ENCODE measurements at regions of chr13 and their contacts with region 1.

Region 1: DNA sequence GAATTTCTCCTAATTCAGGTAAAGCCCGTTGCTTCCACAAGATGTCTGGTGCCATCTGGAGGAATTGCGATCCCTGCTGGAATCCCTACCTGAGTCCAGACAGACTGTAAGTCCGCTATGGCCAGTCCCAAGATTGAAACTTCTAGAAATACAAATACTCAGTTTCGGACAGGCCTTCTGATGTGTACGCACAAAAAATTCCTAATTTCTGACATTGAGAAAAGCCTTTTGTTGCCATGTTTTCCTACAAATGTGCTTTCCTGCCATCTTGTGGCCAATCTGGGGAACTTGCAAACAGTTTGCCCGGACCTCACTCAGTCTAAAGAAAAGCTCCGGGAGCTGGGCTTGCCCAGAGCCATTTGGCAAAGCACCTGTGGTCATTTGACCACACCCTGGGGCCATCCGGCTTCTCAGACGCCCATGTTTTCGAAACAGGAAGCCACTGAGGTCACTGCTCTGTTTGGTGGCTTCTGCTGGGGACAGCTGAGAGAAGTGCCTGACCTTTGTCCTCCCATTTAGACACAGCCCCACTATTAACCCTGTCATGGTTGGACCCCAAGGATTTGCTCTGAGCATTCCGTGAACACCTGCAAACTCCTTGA is 79.4 kb downstream of the SLC15A1 start:
- DNase-seq: peak; percentile 41 to 66 (median 47)
- H3K4me3 ChIP-seq: no peak overlapping the region
- H3K27ac ChIP-seq: no peak overlapping the region
- H3K4me1 ChIP-seq: peaks cover 1% of the 10 kb centered on the region
- H3K27me3 ChIP-seq: no peaks in the 10 kb centered on the region
- CTCF ChIP-seq: peak; percentile 51 to 78 (median 66)
- EP300 ChIP-seq: no peak
- POLR2A ChIP-seq: no peak

Region 2: DNA sequence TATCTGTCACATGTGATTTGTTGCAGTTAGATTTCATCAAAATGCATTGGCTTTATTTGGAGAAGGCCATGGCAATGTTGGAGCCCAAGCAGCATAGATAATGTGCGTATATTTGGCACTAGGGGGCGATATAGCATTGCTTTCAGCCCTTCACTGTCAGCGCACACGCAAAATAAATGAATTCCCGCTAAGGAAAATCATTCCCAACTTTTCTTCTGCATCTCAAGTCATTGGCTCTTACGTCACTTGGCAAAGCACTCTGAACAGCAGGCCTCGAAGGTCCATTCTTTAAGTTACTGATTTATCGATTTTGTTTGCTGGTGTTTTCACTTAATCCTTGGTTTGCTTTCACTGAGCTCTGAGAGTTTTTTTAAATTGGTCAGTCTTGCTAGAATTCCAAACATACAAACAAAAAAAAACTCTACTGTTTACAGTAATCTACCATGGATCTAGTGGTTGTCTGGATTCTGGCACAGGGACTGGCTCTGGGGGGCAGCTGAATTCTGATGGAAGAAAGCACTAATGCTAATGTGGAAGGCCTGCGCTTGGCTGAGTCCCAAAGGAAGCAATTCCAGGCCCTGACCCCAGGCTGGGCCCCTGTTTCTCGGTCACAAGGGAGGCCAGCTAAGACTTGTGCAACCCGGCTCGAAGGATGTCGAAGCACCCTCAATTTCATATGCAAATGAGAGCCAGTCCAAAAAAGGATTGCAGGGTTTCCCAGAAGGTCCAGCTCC is 817.3 kb before region 1 on chr13:
- intact Hi-C with region 1: loop called in 1 of 4 experiments (anchors 10 kb)
- DNase-seq: peak; percentile 21 to 48 (median 41)
- H3K4me3 ChIP-seq: no peak overlapping the region
- H3K27ac ChIP-seq: no peak overlapping the region
- H3K4me1 ChIP-seq: peaks cover 3% of the 10 kb centered on the region
- H3K27me3 ChIP-seq: no peaks in the 10 kb centered on the region
- CTCF ChIP-seq: peak; percentile 47 to 68 (median 50)
- EP300 ChIP-seq: no peak
- POLR2A ChIP-seq: no peak

Region 3: DNA sequence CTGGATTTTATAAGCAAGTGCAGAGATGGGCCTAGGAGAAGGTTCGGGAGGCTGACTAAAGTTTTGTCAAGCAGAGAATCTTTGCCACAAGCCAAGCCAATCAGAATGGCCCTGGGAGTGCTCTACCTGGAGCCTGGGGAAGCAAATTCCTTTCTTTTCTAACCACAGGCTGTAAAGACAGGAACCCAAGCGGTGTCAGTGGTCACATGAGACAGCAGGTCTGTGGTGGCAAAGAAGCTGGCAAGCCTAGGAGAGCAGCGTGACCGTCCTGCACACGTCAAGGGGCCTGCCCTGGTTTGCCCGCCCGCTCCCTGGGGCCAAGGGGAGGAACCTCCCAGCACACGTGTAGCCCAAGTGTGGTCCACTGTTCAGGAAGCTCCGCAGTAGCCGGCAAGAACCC is 628.7 kb before region 1 on chr13:
- intact Hi-C with region 1: loop called in 1 of 4 experiments (anchors 10 kb)
- DNase-seq: no peak
- H3K4me3 ChIP-seq: no peak overlapping the region
- H3K27ac ChIP-seq: no peak overlapping the region
- H3K4me1 ChIP-seq: no peaks in the 10 kb centered on the region
- H3K27me3 ChIP-seq: no peaks in the 10 kb centered on the region
- CTCF ChIP-seq: no peak
- EP300 ChIP-seq: no peak
- POLR2A ChIP-seq: no peak

Region 4: DNA sequence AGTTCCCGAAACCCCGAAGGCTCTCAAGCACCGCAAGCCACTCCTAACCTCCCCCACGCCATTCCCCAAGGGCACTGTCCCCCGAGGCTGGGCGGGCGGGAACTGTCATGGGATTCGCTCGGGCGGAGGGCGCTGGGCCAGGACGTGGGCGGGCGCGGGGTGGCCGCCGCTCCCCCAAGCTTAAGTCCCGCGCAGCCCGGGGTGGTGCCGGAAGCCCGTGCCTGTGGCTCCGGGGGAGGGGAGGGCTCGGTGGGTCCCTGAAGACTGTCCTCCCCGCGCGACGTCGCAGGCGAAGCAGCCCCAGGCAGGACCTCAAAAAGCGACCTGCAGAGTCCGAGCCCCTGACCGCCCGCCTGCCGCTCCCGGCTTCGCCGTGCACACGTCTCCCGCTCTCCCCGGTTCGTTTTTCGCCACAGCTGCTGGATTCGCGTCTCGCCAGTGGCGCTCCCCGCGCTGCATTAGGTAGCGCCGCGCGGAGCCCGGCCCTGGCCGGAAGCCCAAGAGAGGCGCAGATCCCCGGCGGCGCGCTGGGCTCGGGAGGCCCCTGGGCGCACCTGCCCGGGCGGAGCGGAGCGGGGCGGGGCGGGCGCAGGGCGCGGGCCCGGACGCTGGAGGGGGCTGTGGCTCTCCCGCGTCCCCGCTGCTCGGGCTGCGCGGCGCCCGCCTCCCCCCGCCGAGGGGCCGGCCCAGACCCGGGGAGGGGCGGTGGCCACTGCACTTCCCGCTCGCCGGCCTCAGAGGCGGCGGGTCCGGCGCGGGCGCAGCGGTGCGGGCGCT is 530.5 kb before region 1 on chr13 and contains the start of gene FARP1:
- intact Hi-C with region 1: loop called in 1 of 4 experiments (anchors 10 kb)
- DNase-seq: peak; percentile 69 to 85 (median 77)
- H3K4me3 ChIP-seq: peak within 1 kb of the TSS; percentile 38
- H3K27ac ChIP-seq: peak within 1 kb of the TSS in 1 of 2 donors; percentile 2
- H3K4me1 ChIP-seq: peaks cover 1% of the 10 kb centered on the region
- H3K27me3 ChIP-seq: no peaks in the 10 kb centered on the region
- CTCF ChIP-seq: peak in 2 of 3 donors; percentile 60 to 65
- EP300 ChIP-seq: no peak
- POLR2A ChIP-seq: no peak
- total RNA-seq, gene FARP1: 21.9 to 90.1 (median 35.6) TPM

Region 5: DNA sequence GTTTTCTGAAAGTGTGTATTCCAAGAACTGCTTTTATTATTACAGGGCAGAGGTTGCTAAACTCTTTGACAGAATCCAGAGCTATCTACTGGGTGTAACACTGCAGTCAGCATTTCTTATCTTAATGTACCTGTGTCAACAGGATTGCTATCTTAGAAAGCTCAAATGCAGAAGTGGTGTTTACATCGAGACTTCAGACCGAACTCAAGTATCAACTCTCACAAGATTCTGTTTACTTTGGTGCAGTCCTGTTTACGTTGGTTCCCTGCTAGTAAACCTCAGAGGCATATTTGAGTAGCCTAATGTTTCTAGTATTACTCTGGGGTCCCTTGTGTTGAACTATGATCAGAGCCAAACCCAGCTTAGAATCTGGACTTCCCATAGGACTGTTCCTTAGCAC is 58.9 kb after region 1 on chr13:
- intact Hi-C with region 1: no loop called
- DNase-seq: no peak
- H3K4me3 ChIP-seq: no peak overlapping the region
- H3K27ac ChIP-seq: no peak overlapping the region
- H3K4me1 ChIP-seq: no peaks in the 10 kb centered on the region
- H3K27me3 ChIP-seq: no peaks in the 10 kb centered on the region
- CTCF ChIP-seq: no peak
- EP300 ChIP-seq: no peak
- POLR2A ChIP-seq: no peak

Region 6: GRCh38 chr13:98772794-98773452 is 99.9 kb after region 1 on chr13:
- intact Hi-C with region 1: no loop called
- DNase-seq: no peak
- H3K4me3 ChIP-seq: no peak overlapping the region
- H3K27ac ChIP-seq: no peak overlapping the region
- H3K4me1 ChIP-seq: no peaks in the 10 kb centered on the region
- H3K27me3 ChIP-seq: no peaks in the 10 kb centered on the region
- CTCF ChIP-seq: no peak
- EP300 ChIP-seq: no peak
- POLR2A ChIP-seq: no peak

Measured in ovary (tissue), 10 donors.